Naive thymus-derived CD4-positive, alpha-beta T cell (primary cell): ENCODE measurements at regions of chr12 and their contacts with region 1.

Region 1: GRCh38 chr12:123365025-123365917 is 624 bp upstream of the SBNO1 start:
- DNase-seq: peak; percentile 91 to 99 (median 98)
- ATAC-seq: peak; percentile 85
- H3K4me3 ChIP-seq: peak overlapping the region; percentile 97
- H3K4me3 Mint-ChIP-seq: peak overlapping the region; percentile 89 to 98 (median 95)
- H3K27ac ChIP-seq: peak overlapping the region; percentile 86
- H3K27ac Mint-ChIP-seq: peak overlapping the region; percentile 93 to 99 (median 95)
- H3K4me1 ChIP-seq: peaks cover 14 to 16% of the 10 kb centered on the region in 2 donors
- H3K4me1 Mint-ChIP-seq: peaks cover 11 to 29% (median 16%) of the 10 kb centered on the region in 7 donors
- H3K27me3 ChIP-seq: no peaks in the 10 kb centered on the region
- H3K27me3 Mint-ChIP-seq: no peaks in the 10 kb centered on the region

Region 2: GRCh38 chr12:122965851-122966722 is 399.2 kb before region 1 on chr12 and contains the start of gene ABCB9:
- CTCF ChIA-PET with region 1: no interaction called
- POLR2A ChIA-PET with region 1: no interaction called
- intact Hi-C with region 1: loop called in 1 of 2 experiments (anchors 1 kb)
- DNase-seq: peak; percentile 78 to 95 (median 85)
- ATAC-seq: peak; percentile 99
- H3K4me3 ChIP-seq: peak within 1 kb of the TSS; percentile 80
- H3K4me3 Mint-ChIP-seq: peak within 1 kb of the TSS; percentile 47 to 84 (median 76)
- H3K27ac ChIP-seq: peak within 1 kb of the TSS; percentile 67
- H3K27ac Mint-ChIP-seq: peak within 1 kb of the TSS in 8 of 9 donors; percentile 22 to 90 (median 70)
- H3K4me1 ChIP-seq: peaks cover 10 to 15% of the 10 kb centered on the region in 2 donors
- H3K4me1 Mint-ChIP-seq: peaks cover 5 to 20% (median 12%) of the 10 kb centered on the region in 7 donors
- H3K27me3 ChIP-seq: no peaks in the 10 kb centered on the region
- H3K27me3 Mint-ChIP-seq: no peaks in the 10 kb centered on the region
- total RNA-seq, gene ABCB9: 6.2 to 8.9 (median 7.1) TPM

Region 3: GRCh38 chr12:123271001-123271729 is 94.1 kb before region 1 on chr12:
- CTCF ChIA-PET with region 1: no interaction called
- POLR2A ChIA-PET with region 1: interaction called, 3 read pairs
- intact Hi-C with region 1: loop called (anchors 1 kb)
- DNase-seq: peak; percentile 55 to 84 (median 68)
- ATAC-seq: peak; percentile 88
- H3K4me3 ChIP-seq: no peak overlapping the region
- H3K4me3 Mint-ChIP-seq: peak overlapping the region in 1 of 10 donors; percentile 87
- H3K27ac ChIP-seq: no peak overlapping the region
- H3K27ac Mint-ChIP-seq: no peak overlapping the region
- H3K4me1 ChIP-seq: peaks cover 12 to 18% of the 10 kb centered on the region in 2 donors
- H3K4me1 Mint-ChIP-seq: peaks cover 7 to 30% (median 20%) of the 10 kb centered on the region in 7 donors
- H3K27me3 ChIP-seq: no peaks in the 10 kb centered on the region
- H3K27me3 Mint-ChIP-seq: no peaks in the 10 kb centered on the region

Region 4: GRCh38 chr12:123388177-123388947 is 23.1 kb after region 1 on chr12:
- CTCF ChIA-PET with region 1: interaction called, 5 read pairs
- POLR2A ChIA-PET with region 1: interaction called, 20 read pairs
- intact Hi-C with region 1: loop called (anchors 1 kb)
- DNase-seq: peak; percentile 64 to 84 (median 75)
- ATAC-seq: peak; percentile 75
- H3K4me3 ChIP-seq: peak overlapping the region; percentile 88
- H3K4me3 Mint-ChIP-seq: peak overlapping the region; percentile 78 to 91 (median 84)
- H3K27ac ChIP-seq: peak overlapping the region; percentile 79
- H3K27ac Mint-ChIP-seq: peak overlapping the region in 8 of 9 donors; percentile 47 to 93 (median 86)
- H3K4me1 ChIP-seq: peaks cover 11 to 13% of the 10 kb centered on the region in 2 donors
- H3K4me1 Mint-ChIP-seq: peaks cover 10 to 49% (median 43%) of the 10 kb centered on the region in 7 donors
- H3K27me3 ChIP-seq: no peaks in the 10 kb centered on the region
- H3K27me3 Mint-ChIP-seq: no peaks in the 10 kb centered on the region

Region 5: GRCh38 chr12:123580772-123581171 is 215.5 kb after region 1 on chr12:
- CTCF ChIA-PET with region 1: interaction called, 8 read pairs
- POLR2A ChIA-PET with region 1: no interaction called
- intact Hi-C with region 1: loop called (anchors 1 kb)
- DNase-seq: no peak
- ATAC-seq: no peak
- H3K4me3 ChIP-seq: no peak overlapping the region
- H3K4me3 Mint-ChIP-seq: no peak overlapping the region
- H3K27ac ChIP-seq: no peak overlapping the region
- H3K27ac Mint-ChIP-seq: peak overlapping the region in 4 of 9 donors; percentile 5 to 95 (median 44)
- H3K4me1 ChIP-seq: peaks cover 17 to 21% of the 10 kb centered on the region in 2 donors
- H3K4me1 Mint-ChIP-seq: peaks cover 20 to 30% (median 26%) of the 10 kb centered on the region in 7 donors
- H3K27me3 ChIP-seq: no peaks in the 10 kb centered on the region
- H3K27me3 Mint-ChIP-seq: no peaks in the 10 kb centered on the region

Region 6: GRCh38 chr12:123681605-123682004 is 316.3 kb after region 1 on chr12:
- CTCF ChIA-PET with region 1: no interaction called
- POLR2A ChIA-PET with region 1: no interaction called
- intact Hi-C with region 1: no loop called
- DNase-seq: no peak
- ATAC-seq: no peak
- H3K4me3 ChIP-seq: no peak overlapping the region
- H3K4me3 Mint-ChIP-seq: no peak overlapping the region
- H3K27ac ChIP-seq: no peak overlapping the region
- H3K27ac Mint-ChIP-seq: no peak overlapping the region
- H3K4me1 ChIP-seq: no peaks in the 10 kb centered on the region
- H3K4me1 Mint-ChIP-seq: peaks cover 0 to 6% (median 0%) of the 10 kb centered on the region in 7 donors
- H3K27me3 ChIP-seq: no peaks in the 10 kb centered on the region
- H3K27me3 Mint-ChIP-seq: no peaks in the 10 kb centered on the region

Region 7: DNA sequence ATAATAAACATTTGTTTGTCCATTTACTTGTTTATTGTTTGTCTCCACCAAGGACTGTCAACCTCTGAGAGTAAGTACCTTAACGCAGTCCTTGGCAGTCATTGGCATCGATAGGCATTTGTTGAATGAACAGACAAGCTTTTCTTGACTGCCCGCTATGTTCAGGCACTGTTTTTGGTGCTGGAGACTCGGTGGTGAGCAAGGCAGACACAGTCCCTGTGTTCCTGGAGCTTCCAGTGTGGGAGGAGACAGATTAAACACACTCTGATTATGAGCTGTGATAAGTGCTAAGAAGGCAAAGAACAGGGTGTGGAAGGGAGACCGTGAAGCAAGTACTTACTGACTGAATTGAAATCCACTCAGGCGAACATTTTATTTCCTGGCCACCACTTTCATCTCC is 348.1 kb after region 1 on chr12:
- CTCF ChIA-PET with region 1: no interaction called
- POLR2A ChIA-PET with region 1: interaction called, 5 read pairs
- intact Hi-C with region 1: loop called (anchors 1 to 2 kb)
- DNase-seq: peak in 2 of 9 donors; percentile 7 to 41
- ATAC-seq: no peak
- H3K4me3 ChIP-seq: peak overlapping the region; percentile 95
- H3K4me3 Mint-ChIP-seq: peak overlapping the region; percentile 81 to 100 (median 90)
- H3K27ac ChIP-seq: peak overlapping the region; percentile 77
- H3K27ac Mint-ChIP-seq: peak overlapping the region; percentile 37 to 93 (median 79)
- H3K4me1 ChIP-seq: peaks cover 11 to 21% of the 10 kb centered on the region in 2 donors
- H3K4me1 Mint-ChIP-seq: peaks cover 28 to 42% (median 38%) of the 10 kb centered on the region in 7 donors
- H3K27me3 ChIP-seq: no peaks in the 10 kb centered on the region
- H3K27me3 Mint-ChIP-seq: no peaks in the 10 kb centered on the region